Right ventricle myocardium inferior (tissue), 1 donor: ENCODE measurements at regions of chr3 and their contacts with region 1.

Region 1: DNA sequence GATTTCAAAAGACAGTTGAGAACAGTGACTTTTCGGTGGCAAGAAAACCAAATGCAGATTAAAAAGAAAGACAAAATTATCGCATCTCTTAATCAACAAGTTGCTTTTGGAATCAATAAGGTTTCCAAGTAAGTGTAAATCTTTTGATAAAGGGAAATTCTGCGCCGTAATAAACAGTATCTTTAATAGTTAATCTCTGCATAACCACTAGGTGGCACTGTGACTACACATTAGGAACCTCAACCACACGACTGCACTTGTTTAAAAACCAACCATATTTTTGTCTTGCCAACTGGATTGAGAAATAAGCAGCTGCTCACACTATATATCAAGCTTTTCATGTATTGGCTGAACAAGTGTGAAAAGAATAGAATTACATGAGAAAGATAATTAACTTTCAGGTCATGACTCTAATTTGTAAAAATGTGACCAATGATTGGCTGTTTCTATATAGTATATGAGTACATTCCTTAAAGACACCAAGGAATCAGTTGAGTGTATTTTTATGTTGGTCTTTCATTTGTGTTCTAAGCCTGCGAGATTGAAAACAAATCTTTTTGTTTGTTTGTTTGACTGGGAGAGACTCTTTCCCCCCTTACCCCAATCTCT is 72.7 kb downstream of the DZIP3 start:
- DNase-seq: no peak
- ATAC-seq: peak; percentile 54

Region 2: DNA sequence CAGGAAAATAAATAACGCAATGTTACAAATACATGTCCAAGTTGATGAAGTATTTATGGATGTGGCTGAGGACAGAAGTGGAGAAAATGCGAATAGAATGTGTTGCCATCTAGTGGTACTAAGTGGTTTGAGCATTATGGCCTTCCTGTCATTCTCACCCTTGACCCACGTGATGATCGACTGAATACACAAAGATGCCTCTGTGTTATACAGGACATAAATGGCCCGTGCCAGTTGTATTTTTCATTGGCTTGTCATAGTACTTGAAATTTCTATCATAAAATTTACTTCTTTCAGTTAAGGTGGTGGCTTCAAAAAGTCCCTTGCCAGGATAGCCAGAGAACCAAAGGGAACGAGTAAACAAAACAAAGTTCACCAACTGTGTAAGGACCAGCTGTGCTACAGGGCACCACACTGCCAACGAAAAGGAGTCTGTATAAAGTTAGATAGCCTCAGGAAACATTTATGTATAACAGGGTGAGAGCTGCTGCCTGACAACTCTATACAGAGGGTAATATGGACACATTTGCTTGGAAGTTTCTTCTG is 255.5 kb before region 1 on chr3:
- intact Hi-C with region 1: no loop called
- DNase-seq: no peak
- ATAC-seq: peak; percentile 64

Region 3: GRCh38 chr3:108914774-108915641 is 252.8 kb after region 1 on chr3:
- intact Hi-C with region 1: loop called (anchors 5 kb)
- DNase-seq: no peak
- ATAC-seq: no peak

Region 4: GRCh38 chr3:109081746-109082510 is 419.7 kb after region 1 on chr3:
- intact Hi-C with region 1: loop called (anchors 5 kb)
- DNase-seq: no peak
- ATAC-seq: no peak